AG04449 (cell line): ENCODE measurements at regions of chr2 and their contacts with region 1.

Region 1: DNA sequence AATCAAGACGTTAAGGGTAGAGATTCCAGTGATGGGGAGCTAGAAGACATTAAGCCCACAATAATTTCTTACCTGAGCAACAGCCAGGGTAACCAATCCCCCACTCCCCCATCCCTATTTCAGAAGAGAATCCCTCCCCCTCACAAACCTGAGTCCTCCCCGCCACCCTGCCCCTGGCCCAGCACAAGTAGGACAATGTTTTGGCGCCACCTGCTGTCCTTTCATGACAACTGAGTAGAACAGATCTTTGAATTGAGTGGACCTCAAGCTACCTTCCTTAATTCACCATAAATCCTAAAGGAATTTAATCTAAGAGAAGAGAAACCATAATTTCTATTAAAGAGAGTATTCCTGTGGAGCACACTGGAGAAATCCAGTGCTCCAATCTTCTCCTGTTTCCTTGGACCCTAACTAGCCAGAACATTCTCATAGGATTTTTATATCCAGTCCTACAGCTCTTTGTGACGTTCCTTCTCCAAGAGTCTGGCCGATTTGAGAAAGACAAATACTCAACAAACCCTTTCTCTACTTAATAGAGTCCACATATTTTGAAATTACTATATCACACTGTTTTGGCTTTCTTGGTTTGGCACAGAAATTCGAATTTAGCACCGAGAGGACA is 41.1 kb downstream of the NHEJ1 start:
- DNase-seq: no peak
- H3K4me3 ChIP-seq: no peak overlapping the region
- CTCF ChIP-seq: peak; percentile 69

Region 2: DNA sequence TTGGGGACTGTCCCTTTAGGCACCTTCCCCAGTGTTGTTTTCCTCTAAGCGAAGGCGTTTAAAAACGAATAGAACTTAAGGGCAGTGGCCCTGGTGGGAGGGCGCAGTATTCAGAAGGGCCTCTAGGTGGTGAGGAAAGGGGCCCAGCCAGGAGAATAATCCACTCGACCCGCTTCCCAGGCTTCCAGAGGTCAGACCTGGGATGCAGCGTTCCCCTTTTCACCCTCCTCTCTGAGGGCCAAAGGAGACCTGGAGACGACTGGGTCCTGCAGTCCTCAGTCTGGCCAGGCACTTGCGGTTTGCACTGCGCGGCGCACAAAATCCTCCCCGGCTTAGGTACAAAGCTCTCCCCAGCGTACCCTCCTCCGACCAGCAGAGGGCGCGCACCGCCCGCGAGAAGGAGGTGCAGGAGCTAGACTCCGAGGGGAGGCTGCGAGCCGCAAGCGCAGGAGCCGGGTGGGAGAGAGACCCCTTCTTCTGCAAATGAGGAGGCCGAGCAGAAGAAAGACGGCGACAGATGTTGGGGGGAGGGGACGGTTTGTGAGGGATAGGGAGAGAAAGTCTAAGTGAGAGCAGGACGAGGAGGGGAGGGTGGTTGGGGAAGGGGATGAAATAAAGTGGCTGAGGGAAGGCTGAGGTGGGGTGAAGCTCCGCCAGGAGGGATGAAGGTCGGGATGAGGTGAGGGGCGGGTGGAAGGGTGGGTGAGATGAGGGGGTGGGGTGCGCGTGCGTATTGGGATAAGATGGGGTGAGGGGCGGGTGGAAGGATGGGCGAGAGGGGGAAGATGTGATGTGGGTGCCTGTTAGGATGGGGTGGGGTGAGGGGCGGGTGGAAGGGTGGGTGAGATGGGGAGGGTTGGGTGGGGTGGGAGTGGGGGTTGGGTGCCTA is 139.4 kb before region 1 on chr2:
- CTCF ChIA-PET with region 1: interaction called, 11 read pairs
- POLR2A ChIA-PET with region 1: no interaction called
- DNase-seq: no peak
- H3K4me3 ChIP-seq: peak overlapping the region; percentile 45
- CTCF ChIP-seq: peak; percentile 93

Region 3: GRCh38 chr2:219029829-219030165 is 89.7 kb before region 1 on chr2:
- CTCF ChIA-PET with region 1: interaction called, 171 read pairs
- POLR2A ChIA-PET with region 1: no interaction called
- DNase-seq: peak; percentile 2
- H3K4me3 ChIP-seq: no peak overlapping the region
- CTCF ChIP-seq: peak; percentile 94

Region 4: GRCh38 chr2:219057709-219058540 is 61.6 kb before region 1 on chr2:
- CTCF ChIA-PET with region 1: interaction called, 709 read pairs
- POLR2A ChIA-PET with region 1: no interaction called
- DNase-seq: no peak
- H3K4me3 ChIP-seq: no peak overlapping the region
- CTCF ChIP-seq: peak; percentile 96

Region 5: DNA sequence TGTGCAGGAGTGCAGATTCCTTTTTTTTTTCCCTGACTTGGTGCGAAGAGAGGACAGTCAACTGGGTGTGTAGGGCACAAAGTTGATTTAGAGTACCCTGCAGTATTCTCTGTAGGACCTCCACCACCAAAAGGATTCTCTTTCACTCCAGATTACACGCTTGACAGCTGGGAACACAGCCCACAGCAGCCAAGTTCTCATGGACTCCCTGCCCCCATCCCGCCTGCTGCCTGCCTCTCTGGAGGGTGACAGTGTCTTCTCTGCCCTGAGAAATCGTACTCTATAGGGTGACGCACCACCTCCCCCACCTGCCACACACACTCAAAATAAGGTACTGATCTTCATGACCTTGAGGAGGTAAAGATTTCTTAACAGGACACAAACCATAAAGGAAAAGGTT is 32.2 kb before region 1 on chr2:
- CTCF ChIA-PET with region 1: interaction called, 39 read pairs
- POLR2A ChIA-PET with region 1: no interaction called
- DNase-seq: no peak
- H3K4me3 ChIP-seq: no peak overlapping the region
- CTCF ChIP-seq: no peak

Region 6: GRCh38 chr2:219104107-219105035 is 15.2 kb before region 1 on chr2:
- CTCF ChIA-PET with region 1: interaction called, 46 read pairs
- POLR2A ChIA-PET with region 1: no interaction called
- DNase-seq: no peak
- H3K4me3 ChIP-seq: no peak overlapping the region
- CTCF ChIP-seq: peak; percentile 71

Region 7: DNA sequence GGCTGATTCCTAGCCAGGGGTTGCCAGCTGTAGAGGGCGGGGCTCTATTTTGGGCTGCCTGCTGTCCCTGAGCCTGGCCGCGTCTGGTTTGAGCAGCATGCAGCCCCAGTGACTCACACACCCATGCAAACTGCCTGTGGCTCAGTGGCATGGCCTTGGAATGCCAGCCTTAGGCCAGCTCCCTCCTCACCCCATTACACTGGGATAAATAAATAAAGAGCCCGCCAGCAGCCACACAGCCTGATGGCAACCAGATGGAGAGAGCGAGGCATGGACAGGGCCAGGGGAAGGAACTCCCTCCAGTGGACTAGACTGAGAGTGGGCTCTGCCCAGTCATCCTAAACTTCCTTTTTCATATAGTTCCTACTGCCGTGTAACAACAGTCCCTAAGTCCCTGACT is 22.8 kb after region 1 on chr2:
- CTCF ChIA-PET with region 1: interaction called, 19 read pairs
- POLR2A ChIA-PET with region 1: no interaction called
- DNase-seq: peak; percentile 46
- H3K4me3 ChIP-seq: no peak overlapping the region
- CTCF ChIP-seq: peak; percentile 51